B cell (primary cell): ENCODE measurements at regions of chr3 and their contacts with region 1.

Region 1: DNA sequence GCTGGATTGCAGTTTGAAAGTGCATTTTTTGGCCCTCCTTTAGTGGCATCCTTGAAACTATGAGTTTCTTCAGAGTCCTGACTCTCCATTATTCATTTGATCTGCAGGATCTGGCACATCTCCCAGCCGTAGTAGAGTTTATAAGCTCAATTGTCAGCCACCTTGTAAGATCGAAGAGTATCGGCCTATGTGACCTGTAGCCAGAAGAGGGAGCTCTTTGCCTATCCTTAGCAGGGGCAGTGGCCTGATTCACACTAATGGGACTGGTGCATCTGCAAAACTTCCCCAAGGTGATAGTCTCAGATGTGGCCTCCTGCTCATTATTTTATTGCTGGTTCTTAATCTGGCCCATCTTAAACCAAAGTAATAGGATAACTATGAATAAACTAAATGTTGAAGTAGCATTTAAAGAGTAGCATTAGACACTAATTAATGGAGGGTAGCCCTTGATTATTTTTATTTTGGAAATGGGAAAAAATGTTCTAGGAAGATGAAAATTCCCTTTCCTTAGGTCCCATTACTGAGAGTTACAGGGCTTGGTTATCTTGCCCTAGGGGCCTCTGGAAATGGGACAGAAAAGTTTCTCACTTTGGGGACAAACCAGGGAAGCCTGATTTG is 21.2 kb downstream of the GCSAM start:
- DNase-seq: peak; percentile 88
- ATAC-seq: peak; percentile 84
- H3K4me3 ChIP-seq: no peak overlapping the region
- H3K4me3 Mint-ChIP-seq: no peak overlapping the region
- H3K27ac ChIP-seq: no peak overlapping the region
- H3K27ac Mint-ChIP-seq: no peak overlapping the region
- H3K4me1 ChIP-seq: peaks cover 42 to 47% of the 10 kb centered on the region in 2 donors
- H3K4me1 Mint-ChIP-seq: peaks cover 41% of the 10 kb centered on the region
- H3K27me3 ChIP-seq: no peaks in the 10 kb centered on the region
- H3K27me3 Mint-ChIP-seq: no peaks in the 10 kb centered on the region
- CTCF ChIP-seq: peak; percentile 92

Region 2: GRCh38 chr3:111864821-111865656 is 246.9 kb before region 1 on chr3:
- CTCF ChIA-PET with region 1: no interaction called
- POLR2A ChIA-PET with region 1: no interaction called
- intact Hi-C with region 1: no loop called
- DNase-seq: no peak
- ATAC-seq: no peak
- H3K4me3 ChIP-seq: no peak overlapping the region
- H3K4me3 Mint-ChIP-seq: no peak overlapping the region
- H3K27ac ChIP-seq: no peak overlapping the region
- H3K27ac Mint-ChIP-seq: no peak overlapping the region
- H3K4me1 ChIP-seq: peaks cover 4 to 13% of the 10 kb centered on the region in 2 donors
- H3K4me1 Mint-ChIP-seq: peaks cover 5% of the 10 kb centered on the region
- H3K27me3 ChIP-seq: peaks cover 0 to 4% (median 1%) of the 10 kb centered on the region in 4 experiments
- H3K27me3 Mint-ChIP-seq: no peaks in the 10 kb centered on the region
- CTCF ChIP-seq: no peak

Region 3: DNA sequence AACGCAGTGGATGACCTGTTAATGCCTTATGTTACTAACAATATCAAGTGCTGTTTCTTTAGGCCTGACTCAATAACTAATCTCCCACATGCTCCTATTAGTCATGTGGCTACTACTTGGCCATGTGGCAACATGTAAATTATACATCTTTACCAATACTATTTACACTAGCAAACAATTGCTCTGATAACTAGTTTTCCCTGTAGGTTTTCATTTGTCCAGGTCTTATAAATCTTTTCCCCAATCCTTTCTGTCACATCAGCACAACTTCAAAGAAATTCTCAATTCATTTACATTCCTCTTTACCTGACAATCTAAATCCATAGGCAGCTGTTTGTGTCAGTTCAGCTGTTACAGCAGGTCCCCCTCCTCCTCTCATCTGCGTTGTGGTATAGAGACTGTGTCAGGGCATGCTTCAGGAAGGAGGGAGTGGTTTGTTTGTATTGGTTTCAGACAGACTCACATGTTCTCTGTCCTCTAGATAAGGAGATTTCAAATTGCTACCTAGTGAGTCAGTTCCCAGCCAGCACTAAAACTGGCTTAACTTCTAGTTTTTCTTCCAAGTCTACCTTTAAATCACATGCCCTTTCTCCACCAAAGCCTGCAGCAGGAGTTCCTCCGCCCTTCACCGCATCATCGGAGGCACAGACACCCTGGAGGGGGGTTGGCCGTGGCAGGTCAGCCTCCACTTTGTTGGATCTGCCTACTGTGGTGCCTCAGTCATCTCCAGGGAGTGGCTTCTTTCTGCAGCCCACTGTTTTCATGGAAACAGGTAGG is 37.0 kb before region 1 on chr3:
- CTCF ChIA-PET with region 1: no interaction called
- POLR2A ChIA-PET with region 1: no interaction called
- intact Hi-C with region 1: no loop called
- DNase-seq: no peak
- ATAC-seq: no peak
- H3K4me3 ChIP-seq: no peak overlapping the region
- H3K4me3 Mint-ChIP-seq: no peak overlapping the region
- H3K27ac ChIP-seq: no peak overlapping the region
- H3K27ac Mint-ChIP-seq: no peak overlapping the region
- H3K4me1 ChIP-seq: no peaks in the 10 kb centered on the region
- H3K4me1 Mint-ChIP-seq: peaks cover 6% of the 10 kb centered on the region
- H3K27me3 ChIP-seq: peaks cover 0 to 10% (median 2%) of the 10 kb centered on the region in 4 experiments
- H3K27me3 Mint-ChIP-seq: peaks cover 42% of the 10 kb centered on the region
- CTCF ChIP-seq: no peak

Region 4: DNA sequence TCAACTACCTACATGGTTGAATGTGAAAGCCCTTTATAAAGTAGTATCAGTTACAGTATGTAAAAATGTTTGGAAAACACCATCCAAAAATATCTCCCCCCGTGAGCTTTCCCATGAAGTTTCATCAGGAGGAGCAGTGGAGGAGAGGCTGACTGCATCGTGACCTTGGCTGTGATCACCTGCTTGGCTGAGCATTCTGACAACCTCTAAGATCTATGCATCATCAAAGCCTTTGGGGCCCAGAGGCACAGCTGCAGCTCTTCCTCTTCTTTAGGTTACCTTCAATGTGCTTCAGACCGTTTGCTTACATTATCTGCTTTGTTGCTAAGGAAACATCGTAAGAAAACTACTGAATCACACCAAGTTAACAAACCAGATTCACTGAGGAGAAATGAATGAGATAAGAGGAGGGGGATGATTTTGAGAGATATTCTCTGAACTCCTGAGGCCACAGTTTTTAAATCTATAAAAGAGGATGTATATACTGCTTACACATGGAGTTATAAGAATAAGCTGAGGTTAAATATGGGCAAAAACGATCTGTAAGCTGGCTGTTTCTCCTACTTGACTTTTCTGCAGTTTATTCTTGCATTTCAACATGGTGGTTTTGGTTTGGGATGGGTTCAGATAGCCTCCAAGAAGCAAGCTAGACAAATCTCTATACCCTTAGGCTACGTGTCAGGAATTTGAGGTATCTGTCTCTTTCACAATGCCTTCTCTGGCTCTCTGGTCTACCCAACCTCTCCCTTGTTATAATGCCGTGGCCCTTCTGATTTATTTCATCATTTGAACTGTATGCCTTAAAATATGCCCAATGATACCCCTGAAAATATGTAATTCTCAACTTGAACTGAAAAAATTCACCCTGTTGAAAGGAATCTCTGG is 17.2 kb after region 1 on chr3:
- CTCF ChIA-PET with region 1: interaction called, 27 read pairs
- POLR2A ChIA-PET with region 1: interaction called, 4 read pairs
- intact Hi-C with region 1: loop called (anchors 1 kb)
- DNase-seq: peak; percentile 94
- ATAC-seq: peak; percentile 72
- H3K4me3 ChIP-seq: no peak overlapping the region
- H3K4me3 Mint-ChIP-seq: peak overlapping the region; percentile 50
- H3K27ac ChIP-seq: peak overlapping the region; percentile 93 to 98
- H3K27ac Mint-ChIP-seq: peak overlapping the region; percentile 91
- H3K4me1 ChIP-seq: peaks cover 76 to 90% of the 10 kb centered on the region in 2 donors
- H3K4me1 Mint-ChIP-seq: peaks cover 89% of the 10 kb centered on the region
- H3K27me3 ChIP-seq: no peaks in the 10 kb centered on the region
- H3K27me3 Mint-ChIP-seq: no peaks in the 10 kb centered on the region
- CTCF ChIP-seq: no peak

Region 5: GRCh38 chr3:112167758-112168157 is 55.9 kb after region 1 on chr3:
- CTCF ChIA-PET with region 1: interaction called, 5 read pairs
- POLR2A ChIA-PET with region 1: no interaction called
- intact Hi-C with region 1: loop called (anchors 5 kb)
- DNase-seq: peak; percentile 47
- ATAC-seq: peak; percentile 63
- H3K4me3 ChIP-seq: no peak overlapping the region
- H3K4me3 Mint-ChIP-seq: no peak overlapping the region
- H3K27ac ChIP-seq: no peak overlapping the region
- H3K27ac Mint-ChIP-seq: no peak overlapping the region
- H3K4me1 ChIP-seq: peaks cover 0 to 4% of the 10 kb centered on the region in 2 donors
- H3K4me1 Mint-ChIP-seq: peaks cover 10% of the 10 kb centered on the region
- H3K27me3 ChIP-seq: no peaks in the 10 kb centered on the region
- H3K27me3 Mint-ChIP-seq: peaks cover 3% of the 10 kb centered on the region
- CTCF ChIP-seq: no peak

Region 6: DNA sequence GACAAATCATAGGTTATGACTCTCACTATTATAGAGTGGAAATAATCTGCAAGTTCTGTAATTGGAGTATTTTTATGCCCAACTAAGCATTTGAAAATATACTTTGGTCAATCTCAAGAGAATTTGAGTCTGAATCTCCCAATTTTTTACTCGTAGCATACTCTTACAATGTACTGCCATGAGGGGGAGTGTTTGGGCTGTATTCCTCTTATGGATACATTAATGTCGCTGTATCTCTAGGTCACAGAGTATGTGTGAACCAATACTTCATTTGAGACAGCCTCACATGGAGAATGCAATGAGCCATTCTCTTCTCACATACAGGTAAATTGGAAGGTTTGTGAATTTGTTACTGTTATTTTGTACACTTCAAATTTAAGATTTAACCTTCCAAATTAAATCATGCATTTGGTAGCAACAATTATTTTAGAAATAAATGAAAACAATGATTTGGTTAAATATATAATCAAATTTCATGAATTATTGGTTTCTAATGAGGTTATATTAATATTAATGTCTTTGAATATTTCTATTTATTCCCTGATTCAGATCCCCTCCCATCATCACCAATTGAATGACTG is 215.6 kb after region 1 on chr3:
- CTCF ChIA-PET with region 1: interaction called, 50 read pairs
- POLR2A ChIA-PET with region 1: interaction called, 3 read pairs
- intact Hi-C with region 1: loop called (anchors 5 kb)
- DNase-seq: peak; percentile 80
- ATAC-seq: peak; percentile 99
- H3K4me3 ChIP-seq: no peak overlapping the region
- H3K4me3 Mint-ChIP-seq: no peak overlapping the region
- H3K27ac ChIP-seq: no peak overlapping the region
- H3K27ac Mint-ChIP-seq: no peak overlapping the region
- H3K4me1 ChIP-seq: peaks cover 1 to 3% of the 10 kb centered on the region in 2 donors
- H3K4me1 Mint-ChIP-seq: peaks cover 8% of the 10 kb centered on the region
- H3K27me3 ChIP-seq: no peaks in the 10 kb centered on the region
- H3K27me3 Mint-ChIP-seq: no peaks in the 10 kb centered on the region
- CTCF ChIP-seq: peak; percentile 88

Region 7: DNA sequence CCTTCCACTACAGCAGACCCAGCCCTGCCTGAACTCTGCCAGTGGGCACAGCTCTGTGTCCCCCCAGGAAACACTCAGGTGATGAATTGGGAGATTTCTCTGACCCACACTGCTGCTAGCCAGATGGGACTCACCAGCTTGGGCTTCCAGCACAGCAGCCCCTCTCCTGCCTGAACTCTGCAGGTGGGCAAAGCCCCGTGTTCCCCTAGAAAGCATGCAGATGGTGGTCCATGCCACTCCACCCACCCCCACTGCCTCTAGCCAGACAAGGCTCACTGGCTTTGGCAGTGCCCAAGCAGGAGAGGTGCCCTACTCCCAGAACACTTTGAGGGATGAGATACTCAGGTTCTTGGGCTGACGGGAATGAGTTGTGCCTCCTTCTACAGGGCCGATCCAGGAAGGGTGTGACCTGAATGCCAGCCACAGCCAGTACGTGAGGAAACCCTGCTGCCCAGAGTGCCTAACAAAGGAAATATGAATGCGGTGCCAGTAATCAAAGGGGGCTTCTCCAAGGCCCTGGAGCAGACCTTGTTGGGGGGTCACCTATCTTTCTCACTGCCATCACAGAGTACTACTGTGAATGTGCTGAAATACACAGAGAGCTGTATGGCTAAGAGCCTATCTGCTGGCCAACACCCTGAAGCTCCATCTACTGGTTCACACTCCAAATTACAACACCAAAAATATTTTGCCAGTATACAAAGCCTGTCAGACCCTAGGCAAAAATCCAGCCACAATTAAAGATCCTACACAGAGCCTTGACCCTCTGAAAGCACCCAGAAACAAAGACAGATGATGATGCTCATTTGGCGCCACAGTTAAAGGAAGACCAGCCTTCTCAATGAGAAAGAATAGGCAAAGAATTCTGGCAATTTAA is 325.5 kb after region 1 on chr3:
- CTCF ChIA-PET with region 1: interaction called, 13 read pairs
- POLR2A ChIA-PET with region 1: no interaction called
- intact Hi-C with region 1: no loop called
- DNase-seq: peak; percentile 36
- ATAC-seq: peak; percentile 66
- H3K4me3 ChIP-seq: no peak overlapping the region
- H3K4me3 Mint-ChIP-seq: peak overlapping the region; percentile 5
- H3K27ac ChIP-seq: no peak overlapping the region
- H3K27ac Mint-ChIP-seq: no peak overlapping the region
- H3K4me1 ChIP-seq: peaks cover 12 to 14% of the 10 kb centered on the region in 2 donors
- H3K4me1 Mint-ChIP-seq: peaks cover 56% of the 10 kb centered on the region
- H3K27me3 ChIP-seq: no peaks in the 10 kb centered on the region
- H3K27me3 Mint-ChIP-seq: no peaks in the 10 kb centered on the region
- CTCF ChIP-seq: no peak

Region 8: DNA sequence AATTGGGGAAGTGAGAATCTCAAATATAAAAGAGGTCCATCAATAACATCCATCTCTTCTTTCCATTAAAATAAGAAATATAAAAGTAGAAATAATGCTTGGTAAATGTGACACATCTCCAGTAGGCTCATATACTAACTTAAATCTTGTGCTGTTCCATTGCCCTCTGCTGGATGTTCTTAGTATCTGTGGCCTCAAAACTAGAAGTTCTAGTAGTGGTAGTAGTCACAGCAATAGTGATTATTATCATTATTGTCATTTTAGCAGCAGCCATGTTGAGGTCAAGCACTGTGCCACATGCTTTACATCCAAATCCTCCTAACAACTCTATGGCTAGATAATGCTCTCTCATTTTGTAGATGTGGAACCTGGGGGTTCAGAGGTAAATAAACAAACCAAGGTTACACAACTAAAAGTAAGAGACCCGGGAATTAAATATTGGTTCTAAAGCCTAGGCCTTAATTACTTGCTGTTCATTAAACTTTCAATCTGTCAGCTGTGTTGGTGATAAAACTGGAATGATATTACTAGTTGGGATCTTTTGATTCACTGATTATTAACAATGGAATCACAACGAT is 407.6 kb after region 1 on chr3:
- CTCF ChIA-PET with region 1: interaction called, 55 read pairs
- POLR2A ChIA-PET with region 1: no interaction called
- intact Hi-C with region 1: loop called (anchors 1 kb)
- DNase-seq: peak; percentile 79
- ATAC-seq: peak; percentile 86
- H3K4me3 ChIP-seq: no peak overlapping the region
- H3K4me3 Mint-ChIP-seq: peak overlapping the region; percentile 49
- H3K27ac ChIP-seq: peak overlapping the region in 1 of 2 donors; percentile 74
- H3K27ac Mint-ChIP-seq: peak overlapping the region; percentile 87
- H3K4me1 ChIP-seq: peaks cover 21 to 32% of the 10 kb centered on the region in 2 donors
- H3K4me1 Mint-ChIP-seq: peaks cover 35% of the 10 kb centered on the region
- H3K27me3 ChIP-seq: no peaks in the 10 kb centered on the region
- H3K27me3 Mint-ChIP-seq: no peaks in the 10 kb centered on the region
- CTCF ChIP-seq: peak; percentile 89

Region 9: GRCh38 chr3:112561731-112562688 is 450.1 kb after region 1 on chr3 and contains the starts of genes ATG3 and SLC35A5:
- CTCF ChIA-PET with region 1: interaction called, 11 read pairs
- POLR2A ChIA-PET with region 1: no interaction called
- intact Hi-C with region 1: loop called (anchors 1 kb)
- DNase-seq: peak; percentile 99
- ATAC-seq: peak; percentile 79
- H3K4me3 ChIP-seq: peak within 1 kb of the TSS; percentile 75 to 99 (median 94)
- H3K4me3 Mint-ChIP-seq: peak within 1 kb of the TSS; percentile 99
- H3K27ac ChIP-seq: peak within 1 kb of the TSS; percentile 93 to 96
- H3K27ac Mint-ChIP-seq: peak within 1 kb of the TSS; percentile 100
- H3K4me1 ChIP-seq: peaks cover 23 to 34% of the 10 kb centered on the region in 2 donors
- H3K4me1 Mint-ChIP-seq: peaks cover 50% of the 10 kb centered on the region
- H3K27me3 ChIP-seq: no peaks in the 10 kb centered on the region
- H3K27me3 Mint-ChIP-seq: no peaks in the 10 kb centered on the region
- CTCF ChIP-seq: no peak
- total RNA-seq, gene ATG3: 48.8 and 54.9 TPM in 2 replicates
- total RNA-seq, gene SLC35A5: 32.1 and 34.9 TPM in 2 replicates